Pancreas (tissue), 10 donors: ENCODE measurements at regions of chr20 and their contacts with region 1.

Region 1: GRCh38 chr20:57383447-57384347 is 7.5 kb upstream of the RBM38 start:
- DNase-seq: no peak
- ATAC-seq: no peak
- H3K4me3 ChIP-seq: no peak overlapping the region
- H3K27ac ChIP-seq: no peak overlapping the region
- H3K4me1 ChIP-seq: no peaks in the 10 kb centered on the region
- H3K27me3 ChIP-seq: no peaks in the 10 kb centered on the region
- CTCF ChIP-seq: no peak

Region 2: DNA sequence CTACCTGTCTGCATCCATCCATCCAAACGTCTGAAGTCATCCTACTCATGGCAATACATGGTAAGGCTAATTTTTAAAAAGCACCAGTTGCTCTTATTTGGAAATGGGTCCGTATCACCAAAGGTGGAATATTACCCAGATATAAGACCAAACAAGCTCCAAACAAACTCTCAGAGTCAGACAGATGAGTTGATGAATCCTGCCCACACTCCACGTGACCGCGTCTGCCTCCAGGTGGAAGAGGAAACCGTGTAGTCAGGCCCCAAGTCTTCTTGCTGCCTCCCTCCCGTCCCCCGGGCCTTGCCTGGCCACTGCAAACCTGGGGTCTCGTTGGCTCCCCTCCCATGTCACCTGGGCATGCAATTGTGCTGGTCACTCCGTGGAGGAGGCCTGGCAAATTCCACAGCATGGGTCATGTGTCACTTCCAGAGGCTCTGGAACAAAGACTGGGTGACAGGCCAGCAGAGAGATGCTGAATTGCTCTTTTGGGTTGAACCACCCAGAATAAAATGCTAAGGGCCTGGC is 109.5 kb after region 1 on chr20:
- intact Hi-C with region 1: loop called in 2 of 3 experiments (anchors 5 kb)
- DNase-seq: no peak
- ATAC-seq: no peak
- H3K4me3 ChIP-seq: no peak overlapping the region
- H3K27ac ChIP-seq: no peak overlapping the region
- H3K4me1 ChIP-seq: peaks cover 0 to 5% (median 5%) of the 10 kb centered on the region in 3 donors
- H3K27me3 ChIP-seq: peaks cover 0 to 7% (median 0%) of the 10 kb centered on the region in 4 donors
- CTCF ChIP-seq: no peak